ENCODE measurements at regions of chr7 and their contacts with region 1.

Region 1: GRCh38 chr7:131859147-131859821 is 302.9 kb upstream of the PODXL start:
- DNase-seq: peak; percentile 49
- H3K4me3 Mint-ChIP-seq: no peak overlapping the region
- H3K27ac Mint-ChIP-seq: no peak overlapping the region
- H3K4me1 Mint-ChIP-seq: no peaks in the 10 kb centered on the region
- H3K27me3 Mint-ChIP-seq: no peaks in the 10 kb centered on the region

Region 2: GRCh38 chr7:131803861-131804260 is 55.4 kb before region 1 on chr7:
- CTCF ChIA-PET with region 1: no interaction called
- POLR2A ChIA-PET with region 1: no interaction called
- DNase-seq: no peak
- H3K4me3 Mint-ChIP-seq: no peak overlapping the region
- H3K27ac Mint-ChIP-seq: no peak overlapping the region
- H3K4me1 Mint-ChIP-seq: no peaks in the 10 kb centered on the region
- H3K27me3 Mint-ChIP-seq: no peaks in the 10 kb centered on the region

Region 3: GRCh38 chr7:131843898-131844331 is 15.4 kb before region 1 on chr7:
- CTCF ChIA-PET with region 1: interaction called, 12 read pairs
- POLR2A ChIA-PET with region 1: no interaction called
- DNase-seq: no peak
- H3K4me3 Mint-ChIP-seq: no peak overlapping the region
- H3K27ac Mint-ChIP-seq: no peak overlapping the region
- H3K4me1 Mint-ChIP-seq: no peaks in the 10 kb centered on the region
- H3K27me3 Mint-ChIP-seq: peaks cover 3% of the 10 kb centered on the region

Measured in activated CD4-positive, alpha-beta memory T cell treated with anti-CD3 and anti-CD28 coated beads, Interleukin-2, amount 10 ng/mL, durations not matched to agents 7 days and 5 days (primary cell).